GM13977 (cell line): ENCODE measurements at regions of chr4 and their contacts with region 1.

Region 1: DNA sequence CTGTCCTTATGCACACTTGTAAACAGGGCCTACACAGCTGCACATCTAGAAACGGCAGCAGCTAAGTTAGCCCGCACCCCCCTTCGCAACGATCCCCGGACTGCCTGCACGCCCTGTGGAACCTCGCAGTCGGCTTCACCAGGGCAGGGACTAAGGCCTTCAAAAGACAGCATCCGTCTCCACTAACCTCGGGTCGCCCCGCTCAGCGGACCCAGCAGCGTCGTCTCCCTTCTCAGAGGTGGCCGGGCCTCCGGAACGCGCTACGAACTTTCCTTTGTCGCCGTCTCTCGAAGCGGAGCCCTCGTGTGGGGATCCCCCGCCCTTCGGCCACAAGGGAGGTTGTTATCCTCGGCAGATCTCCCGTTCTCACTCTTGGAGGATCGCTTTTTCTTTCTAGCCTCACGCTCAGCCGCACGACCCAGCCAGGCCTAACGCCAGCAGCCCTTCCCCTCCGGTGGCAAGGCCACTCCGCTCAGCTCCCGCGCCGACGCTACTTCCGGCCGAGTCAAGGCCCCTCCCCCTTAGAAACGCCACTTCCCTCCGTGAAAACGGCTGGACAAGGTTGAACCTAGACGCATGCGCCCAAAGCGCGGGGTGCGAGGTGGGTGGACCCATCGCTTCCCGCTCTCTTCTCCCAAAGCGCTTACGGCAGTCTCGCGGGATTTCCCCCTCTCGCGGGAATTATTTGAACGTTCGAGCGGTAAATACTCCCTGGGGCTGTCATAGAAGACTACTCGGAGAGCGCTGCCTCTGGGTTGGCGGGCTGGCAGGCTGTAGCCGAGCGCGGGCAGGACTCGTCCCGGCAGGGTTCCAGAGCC is at the starts of genes DCAF16 and NCAPG:
- DNase-seq: peak; percentile 94
- CTCF ChIP-seq: no peak

Region 2: GRCh38 chr4:17155486-17155885 is 655.0 kb before region 1 on chr4:
- in situ Hi-C with region 1: no loop called
- DNase-seq: no peak
- CTCF ChIP-seq: no peak

Region 3: GRCh38 chr4:17552427-17552826 is 258.0 kb before region 1 on chr4:
- in situ Hi-C with region 1: loop called (anchors 10 kb)
- DNase-seq: no peak
- CTCF ChIP-seq: no peak

Region 4: DNA sequence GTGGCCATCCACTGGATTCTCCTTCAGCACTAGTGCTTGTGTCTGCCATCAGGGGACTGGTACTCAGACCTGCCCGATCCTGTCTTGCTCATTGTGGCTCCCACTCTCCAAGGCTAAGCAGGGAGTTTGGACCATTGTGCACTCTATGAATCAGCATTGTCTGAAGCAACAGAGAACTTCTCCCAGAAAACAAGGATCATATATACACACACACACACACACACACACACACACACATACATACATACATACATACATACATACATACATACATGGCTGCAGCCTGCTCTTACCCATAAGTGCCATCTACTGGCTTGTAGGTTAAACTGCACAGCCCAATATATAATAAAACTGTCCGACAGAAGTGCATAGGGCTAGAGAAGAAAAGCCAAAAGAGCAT is 556.4 kb after region 1 on chr4:
- in situ Hi-C with region 1: loop called (anchors 10 kb)
- DNase-seq: no peak
- CTCF ChIP-seq: peak; percentile 74

Region 5: DNA sequence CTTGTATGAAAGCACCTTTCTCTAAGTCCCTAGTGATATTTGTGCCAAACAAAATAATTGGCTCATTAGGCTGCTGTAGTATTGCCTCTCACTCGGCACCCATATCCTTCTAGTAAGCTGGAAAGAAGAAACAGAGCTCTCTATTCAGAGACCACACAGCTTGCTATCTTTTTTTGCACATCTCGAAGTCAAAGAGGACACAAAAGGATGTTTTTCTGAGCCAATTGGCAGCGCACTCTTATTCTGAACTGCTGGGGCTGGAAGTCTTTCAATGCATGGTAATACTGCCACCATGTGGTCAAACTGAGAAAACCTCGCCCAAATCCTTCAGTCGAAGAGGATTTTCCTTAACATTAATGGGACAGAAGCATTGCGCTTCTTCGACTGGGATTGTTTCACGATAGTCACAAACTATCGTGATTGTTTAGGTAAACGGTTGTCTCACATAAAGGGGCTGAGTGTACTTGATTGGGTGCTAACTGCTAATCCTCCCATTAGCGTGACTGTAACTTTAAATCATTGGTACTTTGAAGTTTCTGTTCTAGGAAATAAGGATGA is 783.1 kb after region 1 on chr4:
- in situ Hi-C with region 1: loop called (anchors 25 kb)
- DNase-seq: peak; percentile 60
- CTCF ChIP-seq: peak; percentile 84